ENCODE measurements at regions of chr4 and their contacts with region 1.

Region 1: GRCh38 chr4:155442267-155443105 is 65.7 kb upstream of the MAP9 start:
- DNase-seq: peak; percentile 1
- H3K4me3 ChIP-seq: no peak overlapping the region
- CTCF ChIP-seq: peak; percentile 88

Region 2: GRCh38 chr4:155787113-155787710 is 344.7 kb after region 1 on chr4:
- CTCF ChIA-PET with region 1: interaction called, 14 read pairs
- POLR2A ChIA-PET with region 1: no interaction called
- DNase-seq: no peak
- H3K4me3 ChIP-seq: no peak overlapping the region
- CTCF ChIP-seq: peak; percentile 45